Activated T-helper 2 cell treated with anti-CD3 and anti-CD28 coated beads, Interferon-gamma antibody, Interleukin-2, Interleukin-4, amounts not matched to agents 10 μg/mL and 5 μg/mL and 100 μg/mL, durations not matched to agents 14 hours and 24 hours and 36 hours (primary cell): ENCODE measurements at regions of chr10 and their contacts with region 1.

Region 1: DNA sequence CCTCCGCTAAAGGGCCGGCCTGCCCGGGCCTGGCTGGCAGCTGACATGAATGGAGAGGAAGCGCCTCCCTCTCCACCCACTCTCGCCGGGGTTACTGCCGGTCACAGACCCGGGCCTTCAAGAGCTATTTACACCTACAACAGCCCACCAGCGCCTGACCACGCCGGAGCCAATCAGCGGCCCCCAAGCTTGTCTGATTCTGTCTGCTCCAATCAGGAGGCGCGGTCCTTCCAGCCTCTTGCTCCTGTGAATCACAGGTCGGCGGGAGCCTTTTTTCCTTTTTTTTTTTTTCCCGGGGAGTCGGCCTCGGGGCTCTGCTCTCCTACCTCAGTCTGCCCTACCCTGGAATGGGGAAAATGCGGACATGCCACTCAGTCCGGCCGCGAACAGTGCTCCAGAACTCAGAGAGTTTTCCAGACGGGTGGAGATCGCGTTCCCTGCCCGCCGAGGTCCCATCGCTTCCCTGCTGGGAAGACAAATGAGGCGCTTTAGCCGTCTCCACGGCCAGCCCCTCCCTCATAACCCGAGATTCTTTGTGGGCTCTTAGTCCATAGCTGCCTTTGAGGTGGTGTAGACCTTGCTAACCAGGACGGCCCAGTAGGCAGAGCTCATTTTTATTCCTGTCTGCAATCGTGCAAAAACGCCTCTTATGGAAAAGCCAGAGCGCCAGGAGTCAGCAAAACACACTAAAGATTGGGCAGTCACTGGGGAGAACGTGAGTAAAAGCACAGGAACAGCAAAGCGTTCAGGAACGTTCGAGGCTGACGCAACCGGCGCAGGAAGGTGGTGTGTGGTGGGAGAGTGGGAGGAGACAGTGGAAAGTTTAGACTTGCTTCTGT is 26.5 kb downstream of the SCD start:
- DNase-seq: peak; percentile 86
- H3K4me3 Mint-ChIP-seq: no peak overlapping the region
- H3K27ac Mint-ChIP-seq: no peak overlapping the region
- H3K4me1 Mint-ChIP-seq: peaks cover 40% of the 10 kb centered on the region
- H3K27me3 Mint-ChIP-seq: no peaks in the 10 kb centered on the region

Region 2: GRCh38 chr10:100286051-100287033 is 87.2 kb before region 1 on chr10 and contains the start of gene BLOC1S2:
- intact Hi-C with region 1: loop called (anchors 1 kb)
- DNase-seq: peak; percentile 88
- H3K4me3 Mint-ChIP-seq: peak within 1 kb of the TSS; percentile 99
- H3K27ac Mint-ChIP-seq: peak within 1 kb of the TSS; percentile 99
- H3K4me1 Mint-ChIP-seq: peaks cover 19% of the 10 kb centered on the region
- H3K27me3 Mint-ChIP-seq: no peaks in the 10 kb centered on the region
- total RNA-seq, gene BLOC1S2: 49.1 and 56.3 TPM in 2 replicates

Region 3: GRCh38 chr10:100338434-100339036 is 35.0 kb before region 1 on chr10:
- intact Hi-C with region 1: loop called (anchors 5 kb)
- DNase-seq: peak; percentile 71
- H3K4me3 Mint-ChIP-seq: no peak overlapping the region
- H3K27ac Mint-ChIP-seq: no peak overlapping the region
- H3K4me1 Mint-ChIP-seq: peaks cover 17% of the 10 kb centered on the region
- H3K27me3 Mint-ChIP-seq: peaks cover 9% of the 10 kb centered on the region

Region 4: GRCh38 chr10:100346765-100347567 is 26.6 kb before region 1 on chr10 and contains the start of gene SCD:
- intact Hi-C with region 1: loop called (anchors 1 kb)
- DNase-seq: peak; percentile 90
- H3K4me3 Mint-ChIP-seq: peak within 1 kb of the TSS; percentile 100
- H3K27ac Mint-ChIP-seq: peak within 1 kb of the TSS; percentile 92
- H3K4me1 Mint-ChIP-seq: peaks cover 57% of the 10 kb centered on the region
- H3K27me3 Mint-ChIP-seq: no peaks in the 10 kb centered on the region
- total RNA-seq, gene SCD: 273 and 278 TPM in 2 replicates

Region 5: GRCh38 chr10:100391163-100392002 is 17.9 kb after region 1 on chr10:
- intact Hi-C with region 1: loop called (anchors 1 kb)
- DNase-seq: no peak
- H3K4me3 Mint-ChIP-seq: no peak overlapping the region
- H3K27ac Mint-ChIP-seq: peak overlapping the region; percentile 43
- H3K4me1 Mint-ChIP-seq: peaks cover 15% of the 10 kb centered on the region
- H3K27me3 Mint-ChIP-seq: no peaks in the 10 kb centered on the region

Region 6: GRCh38 chr10:100413173-100413572 is 39.7 kb after region 1 on chr10:
- intact Hi-C with region 1: no loop called
- DNase-seq: no peak
- H3K4me3 Mint-ChIP-seq: no peak overlapping the region
- H3K27ac Mint-ChIP-seq: no peak overlapping the region
- H3K4me1 Mint-ChIP-seq: peaks cover 1% of the 10 kb centered on the region
- H3K27me3 Mint-ChIP-seq: peaks cover 11% of the 10 kb centered on the region

Region 7: GRCh38 chr10:100529475-100530298 is 156.2 kb after region 1 on chr10 and contains the start of gene NDUFB8:
- intact Hi-C with region 1: loop called (anchors 5 kb)
- DNase-seq: peak; percentile 83
- H3K4me3 Mint-ChIP-seq: peak within 1 kb of the TSS; percentile 89
- H3K27ac Mint-ChIP-seq: peak within 1 kb of the TSS; percentile 95
- H3K4me1 Mint-ChIP-seq: peaks cover 22% of the 10 kb centered on the region
- H3K27me3 Mint-ChIP-seq: no peaks in the 10 kb centered on the region
- total RNA-seq, gene NDUFB8: 278 and 283 TPM in 2 replicates